SK-N-SH (cell line): ENCODE measurements at regions of chr10 and their contacts with region 1.

Region 1: DNA sequence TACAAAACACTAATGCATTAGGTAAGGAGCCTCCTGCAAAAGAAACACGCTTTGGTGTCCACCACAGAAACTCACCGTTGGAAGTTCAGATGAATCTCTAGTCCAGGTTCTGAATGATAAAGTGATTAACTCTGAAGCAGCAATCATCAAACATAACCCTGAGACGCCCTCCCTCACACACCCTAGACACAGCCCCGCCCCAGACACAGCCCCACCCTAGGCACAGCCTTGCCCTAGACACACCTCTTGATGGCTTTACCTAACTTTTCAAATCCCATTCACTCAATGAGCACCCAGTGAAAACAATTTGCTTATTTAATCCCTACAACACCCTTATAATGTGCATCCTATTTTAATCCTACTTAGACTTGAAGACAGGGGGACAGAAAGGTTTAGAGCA is 21.3 kb upstream of the TMEM254 start:
- DNase-seq: no peak
- H3K4me3 ChIP-seq: no peak overlapping the region
- H3K27ac ChIP-seq: no peak overlapping the region
- H3K4me1 ChIP-seq: no peaks in the 10 kb centered on the region
- H3K27me3 ChIP-seq: no peaks in the 10 kb centered on the region
- CTCF ChIP-seq: no peak
- EP300 ChIP-seq: no peak
- RAD21 ChIP-seq: no peak

Region 2: GRCh38 chr10:80070057-80070456 is 12.9 kb after region 1 on chr10:
- CTCF ChIA-PET with region 1: interaction called, 19 read pairs
- POLR2A ChIA-PET with region 1: no interaction called
- DNase-seq: no peak
- H3K4me3 ChIP-seq: no peak overlapping the region
- H3K27ac ChIP-seq: no peak overlapping the region
- H3K4me1 ChIP-seq: no peaks in the 10 kb centered on the region
- H3K27me3 ChIP-seq: no peaks in the 10 kb centered on the region; the same call in 1 of the 2 replicates
- CTCF ChIP-seq: no peak
- EP300 ChIP-seq: no peak
- RAD21 ChIP-seq: no peak